ENCODE measurements at regions of chr12 and their contacts with region 1.

Region 1: GRCh38 chr12:106223485-106224354 is 24.1 kb downstream of the CKAP4 start:
- DNase-seq: peak; percentile 69
- H3K4me3 ChIP-seq: no peak overlapping the region
- H3K27ac ChIP-seq: no peak overlapping the region
- H3K4me1 ChIP-seq: no peaks in the 10 kb centered on the region
- H3K27me3 ChIP-seq: peaks cover 9% of the 10 kb centered on the region
- CTCF ChIP-seq: peak; percentile 92

Region 2: GRCh38 chr12:105420659-105421240 is 803.0 kb before region 1 on chr12:
- CTCF ChIA-PET with region 1: interaction called, 7 read pairs
- POLR2A ChIA-PET with region 1: no interaction called
- intact Hi-C with region 1: loop called (anchors 1 kb)
- DNase-seq: peak; percentile 71
- H3K4me3 ChIP-seq: no peak overlapping the region
- H3K27ac ChIP-seq: no peak overlapping the region
- H3K4me1 ChIP-seq: no peaks in the 10 kb centered on the region
- H3K27me3 ChIP-seq: no peaks in the 10 kb centered on the region
- CTCF ChIP-seq: peak; percentile 89

Region 3: DNA sequence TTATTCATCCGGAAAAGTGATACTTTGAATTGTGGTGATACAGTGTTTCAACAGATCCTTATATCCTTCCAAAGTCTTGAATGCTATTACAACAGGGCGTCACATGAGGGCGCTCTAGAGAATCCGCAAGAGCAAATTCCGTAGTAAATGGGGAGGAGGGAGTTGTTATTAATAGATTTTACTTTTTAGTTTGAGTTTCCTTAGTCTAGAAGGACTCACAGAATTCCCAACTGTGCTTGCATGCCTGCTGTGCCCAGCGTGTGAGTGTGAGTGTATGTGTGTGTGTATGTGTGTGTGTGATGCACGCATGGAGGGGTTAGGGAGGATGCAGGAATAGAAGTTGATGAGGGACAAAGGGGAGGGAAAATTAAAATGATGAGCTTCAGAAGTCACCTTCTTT is 518.0 kb before region 1 on chr12:
- CTCF ChIA-PET with region 1: no interaction called
- POLR2A ChIA-PET with region 1: no interaction called
- intact Hi-C with region 1: loop called (anchors 5 kb)
- DNase-seq: peak; percentile 64
- H3K4me3 ChIP-seq: no peak overlapping the region
- H3K27ac ChIP-seq: no peak overlapping the region
- H3K4me1 ChIP-seq: no peaks in the 10 kb centered on the region
- H3K27me3 ChIP-seq: no peaks in the 10 kb centered on the region
- CTCF ChIP-seq: peak; percentile 92

Region 4: DNA sequence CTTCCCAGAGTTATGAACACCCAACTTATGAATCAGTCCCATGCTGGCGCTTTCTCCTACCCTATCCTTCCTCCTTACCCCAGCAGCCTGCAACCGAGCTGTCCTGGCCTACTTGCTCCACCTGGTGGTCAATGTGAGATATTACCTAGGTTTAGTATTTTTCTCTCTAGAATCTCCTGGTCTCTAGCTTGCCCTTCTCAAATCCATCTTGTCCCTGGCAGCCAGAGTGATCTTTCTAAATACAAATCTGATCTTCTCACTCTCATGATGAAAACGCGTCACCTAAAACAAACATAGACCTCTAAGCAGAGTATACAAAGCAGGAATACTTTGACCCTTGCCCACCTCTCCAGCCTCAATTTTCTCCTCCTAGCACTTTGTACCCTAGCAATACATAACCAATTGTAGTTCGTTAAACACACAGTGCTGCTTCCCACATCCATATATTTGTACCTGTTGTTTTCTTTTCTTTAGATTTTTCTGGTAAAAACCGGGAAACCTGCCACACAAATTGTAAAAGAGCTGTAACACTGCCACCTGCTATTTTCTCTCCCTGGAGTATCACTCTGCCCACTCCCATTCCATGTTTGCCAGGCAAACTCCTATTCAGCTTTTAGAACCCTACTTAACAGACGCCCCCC is 58.9 kb after region 1 on chr12:
- CTCF ChIA-PET with region 1: interaction called, 10 read pairs
- POLR2A ChIA-PET with region 1: no interaction called
- intact Hi-C with region 1: loop called (anchors 2 kb)
- DNase-seq: peak; percentile 58
- H3K4me3 ChIP-seq: no peak overlapping the region
- H3K27ac ChIP-seq: no peak overlapping the region
- H3K4me1 ChIP-seq: no peaks in the 10 kb centered on the region
- H3K27me3 ChIP-seq: no peaks in the 10 kb centered on the region
- CTCF ChIP-seq: peak; percentile 71

Region 5: GRCh38 chr12:106357549-106358395 is 134.1 kb after region 1 on chr12 and contains the start of gene POLR3B:
- CTCF ChIA-PET with region 1: interaction called, 3 read pairs
- POLR2A ChIA-PET with region 1: no interaction called
- intact Hi-C with region 1: loop called (anchors 10 kb)
- DNase-seq: peak; percentile 97
- H3K4me3 ChIP-seq: peak within 1 kb of the TSS; percentile 70
- H3K27ac ChIP-seq: peak within 1 kb of the TSS; percentile 89
- H3K4me1 ChIP-seq: peaks cover 8% of the 10 kb centered on the region
- H3K27me3 ChIP-seq: no peaks in the 10 kb centered on the region
- CTCF ChIP-seq: peak; percentile 92
- total RNA-seq, gene POLR3B: 13.7 and 14.8 TPM in 2 replicates

Region 6: DNA sequence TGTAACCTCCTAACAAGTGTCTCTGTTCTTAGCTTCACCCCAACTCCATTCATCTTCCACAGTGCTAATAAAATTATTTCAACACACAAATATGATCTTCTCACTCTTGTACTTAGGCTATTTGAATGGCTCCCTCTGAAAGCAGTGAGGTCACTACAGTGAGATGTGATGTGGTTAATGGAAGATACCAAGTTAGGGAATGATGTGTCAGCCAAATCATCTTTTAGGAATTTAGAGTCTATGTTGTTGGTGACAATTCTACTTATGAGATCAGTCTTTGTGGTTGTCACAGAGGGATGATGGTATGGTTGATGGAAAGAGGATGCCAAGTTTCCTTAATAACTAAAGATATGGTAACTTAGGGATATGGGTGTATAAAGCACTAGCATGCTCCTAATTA is 191.4 kb after region 1 on chr12:
- CTCF ChIA-PET with region 1: no interaction called
- POLR2A ChIA-PET with region 1: no interaction called
- intact Hi-C with region 1: no loop called
- DNase-seq: no peak
- H3K4me3 ChIP-seq: no peak overlapping the region
- H3K27ac ChIP-seq: no peak overlapping the region
- H3K4me1 ChIP-seq: peaks cover 12% of the 10 kb centered on the region
- H3K27me3 ChIP-seq: no peaks in the 10 kb centered on the region
- CTCF ChIP-seq: no peak

Region 7: GRCh38 chr12:106841510-106842302 is 618.0 kb after region 1 on chr12:
- CTCF ChIA-PET with region 1: no interaction called
- POLR2A ChIA-PET with region 1: no interaction called
- intact Hi-C with region 1: loop called (anchors 2 kb)
- DNase-seq: peak; percentile 73
- H3K4me3 ChIP-seq: no peak overlapping the region
- H3K27ac ChIP-seq: peak overlapping the region; percentile 67
- H3K4me1 ChIP-seq: peaks cover 28% of the 10 kb centered on the region
- H3K27me3 ChIP-seq: no peaks in the 10 kb centered on the region
- CTCF ChIP-seq: peak; percentile 86

Region 8: DNA sequence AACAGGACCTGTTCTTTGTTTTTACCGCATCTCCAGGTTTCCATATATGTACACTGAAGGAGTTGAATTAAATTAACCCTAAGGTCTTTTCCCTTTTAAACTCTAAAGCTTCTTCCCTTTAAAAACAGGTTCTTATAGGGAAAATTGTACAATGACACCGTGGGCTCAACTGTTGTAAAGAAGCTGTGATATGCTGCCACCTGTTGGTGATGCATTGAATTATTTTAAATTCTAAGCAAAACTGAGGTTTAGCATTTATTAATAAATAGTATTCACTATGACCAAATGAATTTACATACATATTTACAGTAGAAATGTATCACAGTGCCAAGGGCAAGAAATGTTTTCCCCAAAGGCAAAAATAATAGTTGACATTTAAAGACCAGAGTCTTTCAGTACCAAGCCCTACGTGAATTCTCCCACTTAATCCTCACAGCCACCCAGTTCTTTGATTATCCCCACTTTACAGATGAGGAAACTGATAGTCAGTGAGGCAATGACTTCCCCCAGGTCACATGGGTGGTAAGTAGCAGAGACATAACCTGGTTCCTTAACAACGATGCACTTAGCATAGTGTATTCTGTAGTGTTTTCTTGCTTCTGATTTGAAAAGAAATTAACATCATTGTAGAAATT is 696.3 kb after region 1 on chr12:
- CTCF ChIA-PET with region 1: interaction called, 4 read pairs
- POLR2A ChIA-PET with region 1: no interaction called
- intact Hi-C with region 1: loop called (anchors 2 kb)
- DNase-seq: peak; percentile 72
- H3K4me3 ChIP-seq: no peak overlapping the region
- H3K27ac ChIP-seq: no peak overlapping the region
- H3K4me1 ChIP-seq: peaks cover 7% of the 10 kb centered on the region
- H3K27me3 ChIP-seq: no peaks in the 10 kb centered on the region
- CTCF ChIP-seq: peak; percentile 83